ENCODE measurements at regions of chr9 and their contacts with region 1.

Region 1: GRCh38 chr9:133581513-133582343 is 27.5 kb downstream of the FAM163B start:
- DNase-seq: peak in 4 of 5 donors; percentile 47 to 79 (median 68)
- ATAC-seq: peak in 3 of 4 donors; percentile 1 to 27 (median 18)
- H3K4me3 ChIP-seq: no peak overlapping the region
- H3K27ac ChIP-seq: peak overlapping the region in 7 of 12 donors; percentile 16 to 61 (median 30)
- H3K4me1 ChIP-seq: peaks cover 4 to 56% (median 27%) of the 10 kb centered on the region in 12 donors
- H3K27me3 ChIP-seq: peaks cover 8 to 30% (median 15%) of the 10 kb centered on the region in 9 donors
- CTCF ChIP-seq: no peak
- POLR2A ChIP-seq: no peak

Region 2: DNA sequence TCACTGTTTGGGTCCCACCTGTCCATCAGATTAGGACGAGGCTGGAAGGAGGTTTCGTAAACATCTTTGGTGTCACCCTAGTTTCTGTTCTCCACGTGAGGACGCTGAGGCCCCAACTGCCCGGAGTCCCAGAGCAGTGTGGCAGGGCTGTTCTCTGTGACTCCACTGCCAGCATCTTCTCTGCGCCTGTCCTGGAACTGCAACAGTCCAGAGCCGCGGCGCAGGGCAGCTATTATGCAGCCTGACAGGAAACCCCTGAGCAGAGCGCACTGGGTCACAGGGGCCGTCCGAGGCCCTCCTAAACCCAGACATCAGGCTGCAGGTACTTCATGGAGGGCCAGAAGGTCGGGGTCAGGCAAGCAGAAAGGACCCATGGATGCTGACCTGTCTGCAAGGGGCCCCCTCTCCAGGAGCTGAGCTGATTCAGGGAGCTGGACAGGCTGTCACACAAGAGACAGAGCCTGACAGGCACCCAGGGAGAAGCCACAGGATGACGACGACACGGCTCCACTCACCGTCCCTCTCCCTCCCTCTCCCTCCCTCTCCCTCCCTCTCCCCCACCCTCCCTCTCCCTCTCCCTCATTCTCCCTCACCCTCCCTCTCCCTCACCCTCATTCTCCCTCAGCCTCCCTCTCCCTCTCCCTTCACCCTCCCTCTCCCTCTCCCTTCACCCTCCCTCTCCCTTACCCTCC is 86.2 kb after region 1 on chr9:
- intact Hi-C with region 1: no loop called
- DNase-seq: no peak
- ATAC-seq: peak in 1 of 4 donors; percentile 25
- H3K4me3 ChIP-seq: no peak overlapping the region
- H3K27ac ChIP-seq: no peak overlapping the region
- H3K4me1 ChIP-seq: peaks cover 0 to 8% (median 0%) of the 10 kb centered on the region in 12 donors
- H3K27me3 ChIP-seq: peaks cover 0 to 5% (median 0%) of the 10 kb centered on the region in 9 donors
- CTCF ChIP-seq: no peak
- POLR2A ChIP-seq: no peak

Region 3: GRCh38 chr9:133683586-133684120 is 101.9 kb after region 1 on chr9:
- intact Hi-C with region 1: loop called in 2 of 10 experiments (anchors 2 to 5 kb)
- DNase-seq: peak; percentile 68 to 89 (median 85)
- ATAC-seq: peak; percentile 24 to 84 (median 72)
- H3K4me3 ChIP-seq: peak overlapping the region in 2 of 12 donors; percentile 9 to 17
- H3K27ac ChIP-seq: peak overlapping the region; percentile 18 to 84 (median 62)
- H3K4me1 ChIP-seq: peaks cover 0 to 50% (median 33%) of the 10 kb centered on the region in 12 donors
- H3K27me3 ChIP-seq: no peaks in the 10 kb centered on the region
- CTCF ChIP-seq: no peak
- POLR2A ChIP-seq: no peak